Activated T-helper 1 cell treated with anti-CD3 and anti-CD28 coated beads, Interleukin-12 subunit alpha, Interleukin-12 subunit beta, Interleukin-2, Interleukin-4 antibody, amounts not matched to agents 30 ng/mL and 10 ng/mL and 1 ng/mL, durations not matched to agents 14 hours and 24 hours and 36 hours (primary cell): ENCODE measurements at regions of chr2 and their contacts with region 1.

Region 1: GRCh38 chr2:18560031-18560796 is at the start of gene RDH14:
- DNase-seq: peak; percentile 87
- H3K4me3 Mint-ChIP-seq: peak within 1 kb of the TSS; percentile 91
- H3K27ac Mint-ChIP-seq: peak within 1 kb of the TSS; percentile 91
- H3K4me1 Mint-ChIP-seq: peaks cover 38% of the 10 kb centered on the region
- H3K27me3 Mint-ChIP-seq: no peaks in the 10 kb centered on the region
- total RNA-seq, gene RDH14: 12.4 and 14.5 TPM in 2 replicates

Region 2: DNA sequence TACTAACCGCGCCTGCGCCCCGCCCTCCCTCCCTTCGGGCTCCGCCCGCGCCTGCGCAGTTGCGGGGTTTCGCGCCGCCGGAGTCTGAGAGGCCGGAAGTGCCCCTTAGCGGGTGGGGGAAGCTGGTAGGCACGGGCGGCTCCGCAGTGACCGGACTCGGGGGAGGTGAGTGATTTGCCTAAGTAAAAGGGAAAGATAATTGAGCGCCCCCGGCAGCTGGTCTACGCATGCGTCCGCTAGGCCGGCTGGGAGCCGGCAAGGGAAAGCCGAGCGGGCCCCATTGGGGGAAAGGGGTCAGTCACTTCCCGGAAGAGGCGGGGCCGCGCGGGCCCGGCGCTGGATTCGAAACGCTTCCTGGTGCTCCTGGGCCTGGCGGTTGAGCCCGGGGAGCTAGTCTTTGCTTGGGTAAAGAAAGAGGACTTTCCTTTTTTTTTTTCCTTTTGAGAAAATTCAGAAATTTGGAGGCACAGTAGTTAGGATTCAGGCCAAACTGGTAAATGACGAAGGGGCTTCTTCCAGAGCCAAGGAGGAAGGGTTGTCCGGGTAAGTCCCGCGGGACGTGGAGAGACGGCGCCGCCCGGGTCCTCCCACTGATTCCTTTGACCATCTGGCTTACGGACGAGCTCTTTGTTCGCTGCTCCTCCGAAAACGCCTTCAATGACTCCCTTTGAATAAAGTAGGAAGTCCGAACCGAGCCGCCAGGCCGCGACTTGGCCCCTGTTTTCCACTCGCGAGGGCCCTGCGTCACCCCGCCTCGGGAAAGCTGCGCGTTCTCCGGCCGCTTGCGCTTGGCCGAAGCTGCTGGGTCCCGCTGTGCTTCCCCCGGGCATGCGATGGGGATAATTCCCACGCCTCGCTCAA is 806.2 kb before region 1 on chr2 and contains the starts of genes GEN1 and SMC6:
- intact Hi-C with region 1: loop called (anchors 1 kb)
- DNase-seq: peak; percentile 86
- H3K4me3 Mint-ChIP-seq: peak within 1 kb of the TSS; percentile 86
- H3K27ac Mint-ChIP-seq: peak within 1 kb of the TSS; percentile 78
- H3K4me1 Mint-ChIP-seq: peaks cover 69% of the 10 kb centered on the region
- H3K27me3 Mint-ChIP-seq: no peaks in the 10 kb centered on the region
- total RNA-seq, gene GEN1: 28.1 and 31.8 TPM in 2 replicates
- total RNA-seq, gene SMC6: 27.8 and 31.0 TPM in 2 replicates

Region 3: DNA sequence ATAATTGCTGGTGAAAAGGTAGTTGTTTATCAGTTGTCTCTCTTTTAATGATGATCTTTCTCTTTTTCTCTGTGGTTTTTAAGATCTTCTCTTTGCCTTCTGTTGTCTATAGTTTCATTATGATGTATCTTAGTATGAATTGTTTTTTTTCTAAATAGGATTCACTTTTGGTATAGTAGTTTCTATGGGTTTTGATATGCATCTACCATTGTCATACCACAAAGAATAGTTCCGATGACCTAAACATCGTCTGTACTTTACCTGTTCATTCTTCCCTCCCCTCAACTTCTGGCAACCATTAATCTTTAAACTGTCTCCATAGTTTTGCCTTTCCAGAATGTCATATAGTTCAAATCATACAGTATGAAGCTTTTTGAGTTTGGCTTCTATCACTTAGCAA is 19.3 kb before region 1 on chr2:
- intact Hi-C with region 1: loop called (anchors 1 kb)
- DNase-seq: no peak
- H3K4me3 Mint-ChIP-seq: no peak overlapping the region
- H3K27ac Mint-ChIP-seq: no peak overlapping the region
- H3K4me1 Mint-ChIP-seq: peaks cover 14% of the 10 kb centered on the region
- H3K27me3 Mint-ChIP-seq: peaks cover 2% of the 10 kb centered on the region

Region 4: DNA sequence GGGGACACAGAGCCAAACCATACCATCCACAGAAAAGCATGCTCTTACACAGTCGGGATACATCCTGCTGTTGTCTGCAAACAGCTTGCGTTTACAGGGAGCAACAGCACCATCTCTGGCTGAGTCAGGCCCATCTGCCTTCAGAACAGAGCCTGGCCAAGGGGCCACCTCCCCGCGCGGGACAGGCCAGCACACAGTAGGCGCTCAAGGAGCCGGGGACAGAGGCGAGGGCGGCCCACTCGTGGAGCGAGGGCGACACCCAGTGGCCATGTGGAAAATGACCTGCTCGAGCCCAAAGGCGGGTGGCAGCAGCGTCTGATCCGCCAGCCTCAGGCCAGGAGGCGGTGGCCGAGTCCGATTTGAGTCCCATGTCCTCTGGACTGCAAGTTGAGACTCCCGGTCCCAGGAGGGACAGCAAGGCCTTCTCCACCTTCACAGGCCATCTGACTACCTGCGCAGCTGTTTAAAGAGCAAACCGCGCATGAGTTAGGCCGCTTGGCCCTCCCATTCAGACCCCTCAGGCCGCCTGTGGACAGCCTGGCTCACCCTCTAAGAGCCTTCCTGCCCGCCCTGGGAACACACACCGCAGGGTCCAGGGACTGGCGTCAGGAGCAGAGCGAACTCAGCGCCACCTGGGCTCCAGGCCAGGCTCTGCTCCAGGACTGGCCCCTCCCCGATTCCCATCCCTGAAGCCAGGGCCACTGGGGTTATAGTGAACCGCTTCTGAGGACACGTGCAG is 1303.3 kb after region 1 on chr2:
- intact Hi-C with region 1: loop called (anchors 10 kb)
- DNase-seq: peak; percentile 49
- H3K4me3 Mint-ChIP-seq: no peak overlapping the region
- H3K27ac Mint-ChIP-seq: no peak overlapping the region
- H3K4me1 Mint-ChIP-seq: peaks cover 31% of the 10 kb centered on the region
- H3K27me3 Mint-ChIP-seq: peaks cover 11% of the 10 kb centered on the region

Region 5: DNA sequence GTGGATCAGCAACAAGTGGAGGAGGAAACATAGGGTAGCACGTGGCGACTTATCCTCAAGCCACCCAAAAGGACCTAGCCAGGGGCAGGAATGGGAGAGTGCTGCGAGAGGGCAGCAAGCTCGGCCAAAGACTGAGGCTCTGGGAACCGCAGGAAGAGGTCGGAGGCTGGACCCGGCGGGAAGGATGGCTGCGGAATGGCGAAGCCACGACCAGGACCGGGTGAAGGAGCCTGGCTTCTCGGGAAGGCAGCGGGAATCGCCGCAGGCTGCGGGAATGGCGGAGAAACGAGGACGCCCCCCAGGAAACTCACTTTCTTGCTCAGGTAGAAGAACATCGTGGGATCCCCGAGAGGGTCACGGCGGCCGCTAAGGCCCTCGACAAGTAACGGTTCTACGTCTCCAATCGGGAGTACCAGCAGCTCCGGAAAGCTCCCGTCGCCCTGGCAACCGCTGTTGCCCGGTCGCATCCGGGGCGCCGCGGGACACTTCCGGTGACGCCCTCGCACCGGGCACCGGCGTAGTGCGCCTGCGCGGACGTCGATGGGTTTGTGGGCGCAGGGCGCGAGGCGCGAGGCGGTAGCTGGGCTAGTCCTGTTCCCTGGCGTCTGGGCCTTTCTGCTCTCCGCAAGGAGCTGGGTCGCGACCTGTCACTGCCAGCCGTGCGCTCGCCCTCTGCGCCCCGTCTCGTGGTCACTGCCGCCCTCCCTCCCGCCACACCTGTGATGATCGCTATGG is 1429.6 kb after region 1 on chr2 and contains the start of gene WDR35:
- intact Hi-C with region 1: loop called (anchors 1 kb)
- DNase-seq: peak; percentile 92
- H3K4me3 Mint-ChIP-seq: peak within 1 kb of the TSS; percentile 90
- H3K27ac Mint-ChIP-seq: peak within 1 kb of the TSS; percentile 69
- H3K4me1 Mint-ChIP-seq: peaks cover 19% of the 10 kb centered on the region
- H3K27me3 Mint-ChIP-seq: peaks cover 30% of the 10 kb centered on the region
- total RNA-seq, gene WDR35: 7.7 and 7.8 TPM in 2 replicates